Activated CD4-positive, alpha-beta memory T cell treated with anti-CD3 and anti-CD28 coated beads for 36 hours (primary cell): ENCODE measurements at regions of chr20 and their contacts with region 1.

Region 1: DNA sequence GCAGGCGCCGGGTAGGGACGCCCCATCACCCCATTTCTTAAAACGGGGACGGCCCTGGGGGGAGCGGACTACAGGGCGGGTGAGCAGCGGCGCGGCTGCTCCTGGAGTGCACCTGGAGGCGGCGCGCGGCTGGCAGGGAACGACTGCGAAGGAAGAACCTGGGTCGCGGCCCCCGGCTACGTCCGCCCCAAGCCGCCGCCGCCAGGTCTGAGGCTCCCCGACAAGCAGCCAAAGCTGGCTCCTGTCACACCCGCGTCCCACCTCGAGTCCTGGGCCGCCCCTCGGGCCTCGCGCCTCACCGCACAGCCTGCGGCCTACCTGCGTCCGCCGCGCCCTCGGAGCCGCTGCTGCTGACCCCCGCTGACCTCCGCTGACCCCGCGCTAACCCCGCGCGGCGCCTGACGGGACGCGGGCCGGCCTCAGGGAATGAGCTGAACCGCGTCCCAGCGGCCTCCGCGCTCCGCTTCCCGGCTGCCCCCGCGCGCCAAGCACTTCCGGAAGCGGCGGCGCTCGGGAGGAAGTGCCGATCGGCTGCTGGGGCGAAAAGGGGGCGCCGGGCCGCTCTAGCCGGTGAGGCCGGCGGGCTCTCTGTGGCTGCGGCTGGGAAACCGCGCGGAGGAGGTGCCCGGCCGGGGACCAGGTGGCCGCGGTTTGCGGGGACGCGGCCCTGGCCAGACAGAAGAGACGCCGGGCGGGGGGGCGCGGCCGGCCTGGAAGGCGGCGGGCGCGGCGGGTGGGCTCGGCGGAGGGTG is at the starts of genes ARFRP1 and ZGPAT:
- DNase-seq: peak; percentile 93
- H3K4me3 Mint-ChIP-seq: peak within 1 kb of the TSS; percentile 93
- H3K27ac Mint-ChIP-seq: peak within 1 kb of the TSS; percentile 94
- H3K4me1 Mint-ChIP-seq: peaks cover 44% of the 10 kb centered on the region
- H3K27me3 Mint-ChIP-seq: no peaks in the 10 kb centered on the region
- total RNA-seq, gene ARFRP1: 54.6 to 58.4 TPM
- total RNA-seq, gene ZGPAT: 28.7 to 29.9 TPM

Region 2: GRCh38 chr20:63733186-63734081 is 25.7 kb after region 1 on chr20:
- CTCF ChIA-PET with region 1: interaction called, 26 read pairs
- POLR2A ChIA-PET with region 1: interaction called, 30 read pairs
- intact Hi-C with region 1: loop called (anchors 2 kb)
- DNase-seq: no peak
- H3K4me3 Mint-ChIP-seq: no peak overlapping the region
- H3K27ac Mint-ChIP-seq: no peak overlapping the region
- H3K4me1 Mint-ChIP-seq: peaks cover 21% of the 10 kb centered on the region
- H3K27me3 Mint-ChIP-seq: no peaks in the 10 kb centered on the region

Region 3: DNA sequence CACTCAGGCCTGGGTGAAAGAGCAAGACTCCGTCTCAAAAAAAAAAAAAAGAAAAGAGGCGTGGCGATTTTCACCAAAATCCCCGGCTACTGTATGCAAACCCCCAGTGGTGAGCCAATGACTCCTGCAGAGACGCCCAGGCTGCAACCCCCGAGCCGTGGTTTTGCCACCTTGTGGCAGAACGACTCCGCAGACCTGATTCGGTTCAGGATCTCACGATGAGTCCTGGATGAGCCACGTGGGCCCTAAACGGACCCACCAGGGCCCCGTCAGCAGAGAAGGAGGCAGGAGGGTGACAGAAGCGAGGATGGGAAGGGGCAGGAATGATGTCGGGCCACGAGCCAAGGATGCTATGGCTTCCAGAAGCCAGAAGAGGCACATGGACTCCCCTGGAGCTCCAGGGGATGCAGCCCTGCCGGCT is 74.3 kb after region 1 on chr20:
- CTCF ChIA-PET with region 1: interaction called, 4 read pairs
- POLR2A ChIA-PET with region 1: interaction called, 5 read pairs
- intact Hi-C with region 1: loop called (anchors 1 kb)
- DNase-seq: peak; percentile 79
- H3K4me3 Mint-ChIP-seq: no peak overlapping the region
- H3K27ac Mint-ChIP-seq: no peak overlapping the region
- H3K4me1 Mint-ChIP-seq: peaks cover 13% of the 10 kb centered on the region
- H3K27me3 Mint-ChIP-seq: no peaks in the 10 kb centered on the region

Region 4: DNA sequence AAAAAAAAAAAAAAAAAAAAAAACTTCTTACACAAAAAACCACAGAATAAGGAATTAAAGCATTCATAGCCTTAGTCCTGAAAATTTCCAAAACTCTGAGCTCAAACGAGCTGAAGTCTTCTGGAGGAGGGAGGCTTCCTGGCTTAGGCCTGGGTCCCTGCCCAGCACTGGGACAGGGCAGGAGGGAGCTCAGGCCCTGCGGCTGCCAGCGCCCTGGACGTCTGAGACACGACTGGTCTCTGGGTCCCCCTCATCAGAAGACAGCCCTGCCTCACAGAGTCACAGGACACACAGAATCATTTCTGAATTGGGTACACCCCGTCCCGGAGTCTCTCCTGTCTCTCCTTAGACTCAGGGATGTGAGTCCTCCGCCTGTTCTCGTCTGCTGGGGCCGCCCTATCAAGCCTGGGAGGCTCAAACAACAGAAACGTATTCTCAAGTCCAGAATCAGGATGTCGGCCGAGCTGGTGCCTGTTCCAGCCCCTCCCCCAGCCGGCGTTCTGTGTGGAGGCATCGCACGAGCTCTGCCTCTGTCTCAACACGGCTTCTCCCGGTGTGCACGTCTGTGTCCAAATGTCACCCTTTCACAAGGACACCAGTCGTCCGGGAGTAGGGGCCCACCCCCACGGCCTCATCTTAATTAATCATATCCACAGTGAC is 83.9 kb after region 1 on chr20:
- CTCF ChIA-PET with region 1: interaction called, 5 read pairs
- POLR2A ChIA-PET with region 1: interaction called, 5 read pairs
- intact Hi-C with region 1: loop called (anchors 2 kb)
- DNase-seq: no peak
- H3K4me3 Mint-ChIP-seq: no peak overlapping the region
- H3K27ac Mint-ChIP-seq: no peak overlapping the region
- H3K4me1 Mint-ChIP-seq: peaks cover 3% of the 10 kb centered on the region
- H3K27me3 Mint-ChIP-seq: peaks cover 10% of the 10 kb centered on the region

Region 5: DNA sequence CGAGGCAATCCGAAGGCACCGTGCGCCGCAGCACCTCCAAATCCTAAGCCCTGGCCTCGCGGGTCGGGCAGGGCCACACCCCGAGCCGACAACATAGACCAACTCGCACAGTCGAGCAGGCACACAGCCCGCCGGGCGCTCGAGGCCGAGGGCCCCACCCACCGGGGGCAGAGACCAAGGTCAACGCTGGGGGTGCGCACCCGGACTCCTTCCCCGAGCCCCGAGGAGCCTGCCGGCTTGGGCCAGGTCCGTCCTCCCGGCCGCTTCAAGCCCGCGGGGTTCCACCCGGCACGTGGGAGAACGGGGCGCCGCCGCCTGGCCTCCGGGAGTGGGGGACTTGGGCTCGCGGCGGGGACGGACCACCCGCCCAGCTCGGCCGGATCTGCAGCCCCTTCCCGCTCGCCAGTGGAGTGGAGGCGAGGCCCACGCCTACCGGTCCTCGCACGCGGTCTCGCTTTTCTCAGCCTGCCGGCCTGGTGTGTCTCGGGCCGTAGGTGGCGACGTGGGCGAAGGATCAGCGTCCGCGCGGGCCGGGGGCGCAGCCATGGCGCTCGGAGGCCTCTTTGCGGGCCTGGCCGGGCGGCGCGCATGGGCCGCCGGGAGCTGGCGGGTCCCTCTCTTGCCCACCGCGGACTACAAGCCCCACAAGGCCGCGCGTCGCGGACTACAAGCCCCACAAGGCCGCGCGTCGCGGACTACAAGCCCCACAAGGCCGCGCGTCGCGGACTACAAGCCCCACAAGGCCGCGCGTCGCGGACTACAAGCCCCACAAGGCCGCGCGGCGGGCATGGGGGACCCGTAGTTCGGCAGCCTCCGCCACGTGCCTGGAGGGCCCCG is 248.3 kb after region 1 on chr20 and contains the start of gene UCKL1:
- CTCF ChIA-PET with region 1: interaction called, 4 read pairs
- POLR2A ChIA-PET with region 1: interaction called, 3 read pairs
- intact Hi-C with region 1: loop called (anchors 1 kb)
- DNase-seq: peak; percentile 92
- H3K4me3 Mint-ChIP-seq: peak within 1 kb of the TSS; percentile 81
- H3K27ac Mint-ChIP-seq: peak within 1 kb of the TSS; percentile 89
- H3K4me1 Mint-ChIP-seq: peaks cover 35% of the 10 kb centered on the region
- H3K27me3 Mint-ChIP-seq: no peaks in the 10 kb centered on the region
- total RNA-seq, gene UCKL1: 26.6 to 29.6 TPM